ENCODE measurements at regions of chr20 and their contacts with region 1.

Region 1: DNA sequence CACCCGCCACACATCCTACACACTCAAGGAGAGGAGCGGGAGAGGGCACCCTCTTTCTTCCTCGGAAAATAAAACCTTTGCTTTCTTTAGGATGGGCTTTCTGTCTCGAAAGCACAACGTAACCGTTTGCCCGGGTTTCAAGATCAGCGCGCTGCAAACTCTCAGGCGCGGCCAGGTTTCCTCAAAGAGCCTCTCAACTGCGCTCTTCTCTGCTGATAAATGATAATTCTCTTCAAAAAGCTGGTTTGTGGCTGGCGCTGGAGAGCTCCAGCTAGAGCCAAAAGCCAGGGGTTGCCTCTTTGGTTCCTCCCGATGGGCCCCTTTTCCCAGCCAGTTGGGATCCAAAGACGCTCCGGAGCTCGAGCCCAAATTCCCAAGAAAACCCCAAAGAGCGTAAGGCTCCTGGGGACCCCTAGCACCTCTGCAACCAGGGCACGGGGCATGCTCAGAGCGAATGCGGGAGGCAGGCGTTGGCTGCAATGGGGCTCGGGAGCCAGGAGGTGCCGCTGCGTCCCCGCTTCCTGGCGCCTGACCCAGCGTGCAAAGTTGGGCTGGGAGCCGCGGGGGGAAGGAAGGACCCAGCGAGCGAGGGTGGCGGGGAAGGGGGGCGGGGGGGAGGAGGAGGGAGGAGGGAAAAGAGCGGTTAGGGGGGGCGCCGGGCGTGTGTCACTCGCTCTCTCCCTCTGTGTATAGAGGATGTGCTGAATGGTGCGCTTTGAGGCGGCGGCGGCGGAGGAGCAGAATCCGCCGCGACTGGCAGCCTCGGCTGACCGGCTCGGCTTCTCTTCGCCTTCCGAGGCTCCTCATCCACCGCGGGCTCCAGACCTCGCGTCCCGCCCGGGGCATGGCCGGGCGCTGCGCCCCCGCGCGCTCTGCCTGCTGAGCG is at the start of gene PLCB1:
- DNase-seq: peak; percentile 89
- ATAC-seq: peak; percentile 90
- H3K4me3 Mint-ChIP-seq: peak within 1 kb of the TSS; percentile 68
- H3K27ac Mint-ChIP-seq: no peak within 1 kb of the TSS
- H3K4me1 Mint-ChIP-seq: peaks cover 17% of the 10 kb centered on the region
- H3K27me3 Mint-ChIP-seq: peaks cover 30% of the 10 kb centered on the region
- total RNA-seq, gene PLCB1: 1.4 to 1.5 TPM

Region 2: DNA sequence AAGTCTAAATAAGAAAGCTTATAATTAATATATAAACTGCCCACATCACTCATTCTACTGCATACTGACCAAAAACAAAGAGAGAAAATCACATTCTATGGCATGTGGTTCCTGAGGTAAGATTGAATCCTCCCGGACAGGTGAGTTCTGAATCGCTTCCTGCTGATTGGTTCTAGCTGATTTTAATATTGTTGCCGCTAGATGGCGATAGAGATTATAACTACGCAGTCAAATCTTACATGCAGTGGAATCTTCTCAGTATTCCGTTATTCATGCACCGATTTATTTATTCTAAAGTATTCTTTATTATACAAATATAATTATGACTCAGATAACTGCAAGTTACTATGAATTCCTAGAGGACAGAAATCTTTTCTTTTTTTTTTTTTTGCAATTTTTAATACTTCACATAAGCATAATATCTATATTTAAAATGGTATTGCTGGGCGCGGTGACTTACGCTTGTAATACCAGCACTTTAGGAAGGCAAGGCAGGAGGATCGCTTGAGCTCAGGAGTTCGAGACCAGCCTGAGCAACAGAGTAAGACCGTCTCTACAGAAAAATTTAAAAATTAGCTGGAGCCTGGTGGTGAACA is 88.1 kb before region 1 on chr20:
- CTCF ChIA-PET with region 1: no interaction called
- POLR2A ChIA-PET with region 1: no interaction called
- intact Hi-C with region 1: loop called in 1 of 2 experiments (anchors 1 kb)
- DNase-seq: peak; percentile 18
- ATAC-seq: peak; percentile 72
- H3K4me3 Mint-ChIP-seq: no peak overlapping the region
- H3K27ac Mint-ChIP-seq: no peak overlapping the region
- H3K4me1 Mint-ChIP-seq: peaks cover 1% of the 10 kb centered on the region
- H3K27me3 Mint-ChIP-seq: peaks cover 9% of the 10 kb centered on the region

Region 3: DNA sequence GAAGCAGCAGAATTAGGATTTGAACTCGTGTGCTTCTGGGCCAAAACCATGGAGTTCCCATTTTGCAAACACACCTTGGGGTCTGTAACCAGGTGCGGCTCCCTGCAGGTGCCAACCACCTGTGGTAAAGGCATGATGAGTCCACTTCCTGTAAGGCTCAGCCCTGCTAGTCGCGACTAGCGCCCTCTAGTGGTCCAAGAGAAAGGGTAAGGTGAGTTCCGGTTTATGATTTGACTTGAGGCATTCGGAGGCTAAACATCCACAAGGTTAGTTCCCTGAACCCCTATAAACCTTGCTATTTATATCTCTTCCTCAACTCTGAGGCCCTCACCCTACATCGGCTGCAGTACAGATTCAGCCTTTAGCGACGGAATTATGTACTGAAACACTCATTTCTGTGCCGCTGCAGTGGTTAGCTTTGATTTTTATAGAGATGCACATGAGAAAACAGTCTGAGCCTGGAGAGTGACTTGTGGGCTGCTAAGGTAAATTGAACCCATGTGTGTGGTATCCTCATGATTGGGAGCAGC is 173.7 kb after region 1 on chr20:
- CTCF ChIA-PET with region 1: interaction called, 3 read pairs
- POLR2A ChIA-PET with region 1: no interaction called
- intact Hi-C with region 1: loop called (anchors 1 kb)
- DNase-seq: peak; percentile 85
- ATAC-seq: peak; percentile 88
- H3K4me3 Mint-ChIP-seq: no peak overlapping the region
- H3K27ac Mint-ChIP-seq: no peak overlapping the region
- H3K4me1 Mint-ChIP-seq: peaks cover 6% of the 10 kb centered on the region
- H3K27me3 Mint-ChIP-seq: peaks cover 2% of the 10 kb centered on the region

Region 4: GRCh38 chr20:8454137-8454712 is 322.4 kb after region 1 on chr20:
- CTCF ChIA-PET with region 1: no interaction called
- POLR2A ChIA-PET with region 1: no interaction called
- intact Hi-C with region 1: loop called in 1 of 2 experiments (anchors 2 kb)
- DNase-seq: peak; percentile 48
- ATAC-seq: peak; percentile 95
- H3K4me3 Mint-ChIP-seq: no peak overlapping the region
- H3K27ac Mint-ChIP-seq: no peak overlapping the region
- H3K4me1 Mint-ChIP-seq: peaks cover 6% of the 10 kb centered on the region
- H3K27me3 Mint-ChIP-seq: no peaks in the 10 kb centered on the region

Measured in activated CD4-positive, alpha-beta T cell treated with anti-CD3 and anti-CD28 coated beads for 36 hours (primary cell).